Activated CD4-positive, alpha-beta T cell treated with anti-CD3 and anti-CD28 coated beads, Interleukin-2, amount 10 ng/mL, durations not matched to agents 24 days and 14 days (primary cell): ENCODE measurements at regions of chr12 and their contacts with region 1.

Region 1: GRCh38 chr12:8544295-8544694 is 3.6 kb upstream of the CLEC4E start:
- DNase-seq: peak; percentile 92
- H3K4me3 Mint-ChIP-seq: no peak overlapping the region
- H3K27ac Mint-ChIP-seq: no peak overlapping the region
- H3K4me1 Mint-ChIP-seq: peaks cover 2% of the 10 kb centered on the region
- H3K27me3 Mint-ChIP-seq: peaks cover 42% of the 10 kb centered on the region

Region 2: DNA sequence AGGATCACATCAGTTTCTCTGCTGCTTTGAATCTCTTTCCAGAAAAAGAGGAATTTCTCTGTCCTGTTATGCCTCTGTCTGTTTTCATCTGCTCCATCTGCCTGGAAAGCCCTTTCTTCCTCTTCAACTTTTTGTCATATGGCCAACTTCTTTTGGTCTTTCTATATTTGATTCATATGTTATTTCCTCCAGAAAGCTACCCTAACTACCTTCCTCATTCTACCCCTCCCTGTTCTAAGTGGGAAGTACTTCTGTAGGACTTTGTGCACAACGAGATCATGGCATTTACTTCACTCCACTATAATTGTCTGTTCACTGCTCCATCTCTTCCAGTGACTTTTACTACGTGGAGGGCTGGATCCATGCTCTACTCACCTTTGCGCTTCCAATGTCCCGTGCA is 25.1 kb before region 1 on chr12:
- intact Hi-C with region 1: no loop called
- DNase-seq: no peak
- H3K4me3 Mint-ChIP-seq: no peak overlapping the region
- H3K27ac Mint-ChIP-seq: no peak overlapping the region
- H3K4me1 Mint-ChIP-seq: no peaks in the 10 kb centered on the region
- H3K27me3 Mint-ChIP-seq: peaks cover 41% of the 10 kb centered on the region

Region 3: DNA sequence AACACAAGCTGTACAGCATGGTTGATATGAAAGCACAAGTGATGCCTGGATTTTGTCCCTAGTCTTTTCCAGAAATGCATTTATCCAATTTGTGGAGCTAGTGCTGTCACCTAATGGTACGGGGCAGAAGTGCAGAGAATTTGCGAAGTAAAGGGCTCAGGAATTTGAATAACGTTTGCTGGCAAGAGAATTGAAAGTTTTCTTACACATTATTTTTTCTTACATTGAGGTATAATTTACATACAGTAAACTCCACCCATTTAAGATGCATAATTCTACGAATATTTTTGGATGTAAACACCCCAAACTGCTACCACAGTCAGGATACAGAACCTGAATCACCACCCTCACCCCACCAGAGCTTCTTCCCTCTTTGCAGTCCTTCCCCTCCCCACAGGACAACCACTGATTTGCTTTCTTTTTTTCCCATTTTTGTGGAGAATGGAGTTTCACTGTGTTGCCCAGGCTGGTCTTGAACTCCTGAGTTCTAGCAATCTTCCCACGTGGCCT is 64.8 kb after region 1 on chr12:
- intact Hi-C with region 1: loop called (anchors 5 kb)
- DNase-seq: peak; percentile 62
- H3K4me3 Mint-ChIP-seq: peak overlapping the region; percentile 53
- H3K27ac Mint-ChIP-seq: no peak overlapping the region
- H3K4me1 Mint-ChIP-seq: peaks cover 7% of the 10 kb centered on the region
- H3K27me3 Mint-ChIP-seq: peaks cover 22% of the 10 kb centered on the region

Region 4: GRCh38 chr12:9049520-9050133 is 505.3 kb after region 1 on chr12:
- intact Hi-C with region 1: loop called (anchors 1 kb)
- DNase-seq: peak; percentile 78
- H3K4me3 Mint-ChIP-seq: no peak overlapping the region
- H3K27ac Mint-ChIP-seq: no peak overlapping the region
- H3K4me1 Mint-ChIP-seq: peaks cover 1% of the 10 kb centered on the region
- H3K27me3 Mint-ChIP-seq: peaks cover 6% of the 10 kb centered on the region